Posterior vena cava (tissue), 2 donors: ENCODE measurements at regions of chr7 and their contacts with region 1.

Region 1: GRCh38 chr7:134730411-134730829 is 49.0 kb upstream of the CALD1 start:
- DNase-seq: no peak

Region 2: GRCh38 chr7:134660961-134661376 is 69.5 kb before region 1 on chr7:
- intact Hi-C with region 1: no loop called
- DNase-seq: no peak

Region 3: GRCh38 chr7:134695321-134695860 is 35.0 kb before region 1 on chr7:
- intact Hi-C with region 1: loop called in 1 of 2 experiments (anchors 5 kb)
- DNase-seq: no peak

Region 4: GRCh38 chr7:134720091-134720935 is 10.1 kb before region 1 on chr7:
- intact Hi-C with region 1: no loop called
- DNase-seq: no peak

Region 5: GRCh38 chr7:134741907-134742635 is 11.7 kb after region 1 on chr7:
- intact Hi-C with region 1: no loop called
- DNase-seq: no peak